SK-N-SH (cell line): ENCODE measurements at regions of chr12 and their contacts with region 1.

Region 1: GRCh38 chr12:52879394-52880351 is 25.2 kb downstream of the KRT8 start:
- DNase-seq: peak; percentile 88
- H3K4me3 ChIP-seq: peak overlapping the region; percentile 10 to 51; a peak in 1 of 4 replicates
- H3K27ac ChIP-seq: no peak overlapping the region
- H3K4me1 ChIP-seq: peaks cover 0 to under 1% of the 10 kb centered on the region in 2 experiments; a peak in 1 of 4 replicates
- H3K27me3 ChIP-seq: no peaks in the 10 kb centered on the region
- CTCF ChIP-seq: peak; percentile 74
- EP300 ChIP-seq: no peak
- RAD21 ChIP-seq: peak; percentile 93

Region 2: DNA sequence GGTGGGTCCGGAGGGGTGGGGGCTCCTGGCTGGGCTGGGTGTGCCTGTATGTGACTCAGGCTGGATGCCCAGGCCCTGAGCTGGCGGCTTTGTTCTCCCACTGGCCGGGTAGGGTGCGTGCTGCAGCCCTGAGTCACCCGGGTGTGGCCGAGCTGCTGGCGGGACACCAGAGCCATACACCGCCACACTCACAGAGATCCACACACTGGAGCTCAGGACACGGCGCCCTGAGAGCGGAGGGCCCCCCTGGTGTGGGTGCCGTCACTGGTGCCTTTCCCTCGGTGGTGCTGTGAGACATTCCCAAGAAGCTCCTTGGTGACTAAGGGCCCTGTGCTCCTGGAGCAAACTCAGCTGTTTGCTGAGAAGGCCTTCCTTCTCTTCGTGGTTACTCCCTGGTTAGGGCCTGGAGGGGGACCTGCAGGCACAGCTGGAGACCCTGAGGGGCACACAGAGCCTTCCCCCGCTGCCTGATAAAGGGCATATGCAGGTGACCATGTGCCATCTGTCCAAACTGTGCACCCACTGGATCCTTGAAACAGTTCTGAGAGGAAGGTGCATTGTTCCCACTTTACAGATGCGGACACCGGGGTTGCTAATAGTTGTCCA is 732.2 kb before region 1 on chr12:
- CTCF ChIA-PET with region 1: interaction called, 20 read pairs
- POLR2A ChIA-PET with region 1: no interaction called
- DNase-seq: peak; percentile 58
- H3K4me3 ChIP-seq: no peak overlapping the region
- H3K27ac ChIP-seq: peak overlapping the region in 1 of 2 experiments; percentile 91; a peak in 3 of 4 replicates
- H3K4me1 ChIP-seq: peaks cover 14 to 36% of the 10 kb centered on the region in 2 experiments; a peak in 3 of 4 replicates
- H3K27me3 ChIP-seq: no peaks in the 10 kb centered on the region
- CTCF ChIP-seq: no peak
- EP300 ChIP-seq: peak in 1 of 2 experiments; percentile 88; a peak in 1 of 4 replicates
- RAD21 ChIP-seq: no peak

Region 3: GRCh38 chr12:52372216-52373154 is 507.2 kb before region 1 on chr12:
- CTCF ChIA-PET with region 1: interaction called, 111 read pairs
- POLR2A ChIA-PET with region 1: no interaction called
- DNase-seq: peak; percentile 87
- H3K4me3 ChIP-seq: peak overlapping the region in 1 of 2 experiments; percentile 43; a peak in 1 of 4 replicates
- H3K27ac ChIP-seq: no peak overlapping the region
- H3K4me1 ChIP-seq: no peaks in the 10 kb centered on the region
- H3K27me3 ChIP-seq: peaks cover 48% of the 10 kb centered on the region
- CTCF ChIP-seq: peak; percentile 81
- EP300 ChIP-seq: no peak
- RAD21 ChIP-seq: peak; percentile 94

Region 4: DNA sequence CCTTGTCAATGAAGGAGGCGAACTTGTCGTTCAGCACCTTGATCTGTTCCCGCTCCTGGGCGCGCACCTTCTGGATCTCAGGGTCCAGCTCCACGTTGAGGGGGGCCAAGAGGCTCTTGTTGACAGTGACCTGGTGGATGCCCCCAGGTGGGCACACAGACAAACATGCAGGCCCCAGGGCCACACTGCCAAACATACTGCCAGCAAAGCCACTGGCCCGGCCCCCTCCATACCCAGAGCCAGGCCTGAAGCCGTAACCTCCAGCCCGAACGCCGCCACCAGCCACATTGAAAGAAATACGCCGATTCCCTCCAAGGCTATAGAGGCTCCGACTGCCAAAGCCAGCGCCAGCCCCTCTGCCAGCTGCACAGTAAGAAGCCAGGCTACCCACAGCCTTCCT is 306.4 kb before region 1 on chr12:
- CTCF ChIA-PET with region 1: interaction called, 76 read pairs
- POLR2A ChIA-PET with region 1: no interaction called
- DNase-seq: no peak
- H3K4me3 ChIP-seq: no peak overlapping the region
- H3K27ac ChIP-seq: no peak overlapping the region
- H3K4me1 ChIP-seq: no peaks in the 10 kb centered on the region
- H3K27me3 ChIP-seq: peaks cover 77% of the 10 kb centered on the region; the same call in 1 of the 2 replicates
- CTCF ChIP-seq: no peak
- EP300 ChIP-seq: no peak
- RAD21 ChIP-seq: no peak

Region 5: GRCh38 chr12:52865090-52865944 is 14.4 kb before region 1 on chr12:
- CTCF ChIA-PET with region 1: interaction called, 30 read pairs
- POLR2A ChIA-PET with region 1: no interaction called
- DNase-seq: peak; percentile 87
- H3K4me3 ChIP-seq: peak overlapping the region in 1 of 2 experiments; percentile 17; a peak in 1 of 4 replicates
- H3K27ac ChIP-seq: no peak overlapping the region
- H3K4me1 ChIP-seq: no peaks in the 10 kb centered on the region; a peak in 1 of 4 replicates
- H3K27me3 ChIP-seq: peaks cover 12% of the 10 kb centered on the region; the same call in 1 of the 2 replicates
- CTCF ChIP-seq: peak; percentile 78
- EP300 ChIP-seq: no peak
- RAD21 ChIP-seq: peak; percentile 69

Region 6: DNA sequence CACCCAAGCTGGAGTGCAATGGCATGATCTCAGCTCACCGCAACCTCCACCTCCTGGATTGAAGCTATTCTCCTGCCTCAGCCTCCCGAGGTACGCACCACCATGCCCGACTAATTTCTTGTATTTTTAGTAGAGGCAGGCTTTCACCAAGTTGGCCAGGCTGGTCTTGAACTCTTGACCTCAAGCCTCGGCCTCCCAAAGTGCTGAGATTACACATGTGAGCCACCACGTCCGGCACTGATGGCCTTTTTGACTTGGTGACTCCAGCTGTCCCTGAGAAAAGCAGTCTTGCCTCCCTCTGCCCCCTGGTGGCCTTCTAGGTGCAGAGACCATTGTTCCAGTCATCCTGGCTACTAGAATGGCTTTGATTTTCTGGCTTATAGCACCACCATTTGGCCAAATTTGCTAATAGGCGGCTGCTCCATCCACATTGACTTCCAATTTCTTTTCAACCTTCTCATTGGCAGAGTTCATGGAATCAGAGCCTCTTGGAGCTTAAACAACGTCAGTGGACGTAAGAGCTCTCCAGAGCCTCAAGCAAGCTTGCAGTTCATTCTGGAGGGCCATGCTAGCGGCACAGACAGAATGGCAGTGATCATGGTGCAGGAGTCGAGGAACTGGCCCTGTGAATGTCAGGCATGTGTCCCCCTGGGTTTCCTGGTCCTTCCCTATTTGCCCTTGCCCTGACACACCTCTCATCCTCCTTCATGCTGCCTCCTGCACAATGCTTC is 101.2 kb after region 1 on chr12:
- CTCF ChIA-PET with region 1: interaction called, 485 read pairs
- POLR2A ChIA-PET with region 1: interaction called, 3 read pairs
- DNase-seq: peak; percentile 83
- H3K4me3 ChIP-seq: peak overlapping the region in 1 of 2 experiments; percentile 6; a peak in 1 of 4 replicates
- H3K27ac ChIP-seq: no peak overlapping the region
- H3K4me1 ChIP-seq: peaks cover 0 to 12% of the 10 kb centered on the region in 2 experiments; a peak in 2 of 4 replicates
- H3K27me3 ChIP-seq: no peaks in the 10 kb centered on the region
- CTCF ChIP-seq: peak; percentile 100
- EP300 ChIP-seq: no peak
- RAD21 ChIP-seq: peak; percentile 99

Region 7: DNA sequence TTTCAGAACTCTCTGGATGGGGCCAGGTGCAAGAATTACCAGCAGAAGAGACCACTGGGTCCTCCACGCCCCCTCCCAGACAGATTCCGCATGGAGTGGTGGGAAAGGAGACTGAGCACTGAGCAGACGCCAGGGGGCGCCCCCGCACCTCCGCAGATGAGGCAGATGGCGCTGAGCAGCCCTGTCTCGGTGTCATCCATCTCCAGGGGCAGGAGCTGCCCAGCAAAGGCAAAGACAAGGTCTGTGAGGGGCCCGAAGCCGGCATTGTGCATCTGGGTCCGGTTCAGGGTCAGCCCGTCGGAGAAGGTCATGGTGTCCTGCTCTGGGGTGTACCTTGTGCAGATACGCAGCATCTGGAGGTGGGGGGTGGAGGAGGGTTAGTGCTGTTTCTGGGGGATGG is 333.7 kb after region 1 on chr12:
- CTCF ChIA-PET with region 1: no interaction called
- POLR2A ChIA-PET with region 1: no interaction called
- DNase-seq: peak; percentile 93
- H3K4me3 ChIP-seq: no peak overlapping the region
- H3K27ac ChIP-seq: no peak overlapping the region; a peak in 1 of 4 replicates
- H3K4me1 ChIP-seq: peaks cover 6 to 19% of the 10 kb centered on the region in 2 experiments; a peak in 3 of 4 replicates
- H3K27me3 ChIP-seq: no peaks in the 10 kb centered on the region
- CTCF ChIP-seq: peak; percentile 93
- EP300 ChIP-seq: no peak
- RAD21 ChIP-seq: peak; percentile 96

Region 8: DNA sequence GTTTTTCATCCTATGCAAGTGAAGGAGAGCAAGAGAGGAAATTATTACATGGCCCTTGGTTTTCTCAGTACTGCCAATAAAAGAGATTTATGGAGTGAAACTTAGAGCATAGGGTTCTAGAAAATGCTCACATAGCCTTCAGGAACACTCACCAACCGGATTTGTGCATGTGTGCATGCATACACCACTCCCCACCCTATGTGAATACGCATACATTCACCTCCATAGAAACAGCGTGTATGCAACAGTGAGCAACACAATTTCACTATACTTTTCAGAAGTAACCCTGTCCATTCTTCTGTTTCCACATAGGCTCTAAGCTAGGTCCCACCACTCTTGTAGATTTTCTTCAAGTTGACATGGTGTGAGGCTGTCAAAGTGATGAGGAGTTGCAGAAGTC is 1027.4 kb after region 1 on chr12:
- CTCF ChIA-PET with region 1: no interaction called
- POLR2A ChIA-PET with region 1: no interaction called
- DNase-seq: no peak
- H3K4me3 ChIP-seq: no peak overlapping the region
- H3K27ac ChIP-seq: no peak overlapping the region
- H3K4me1 ChIP-seq: no peaks in the 10 kb centered on the region
- H3K27me3 ChIP-seq: peaks cover 18% of the 10 kb centered on the region
- CTCF ChIP-seq: no peak
- EP300 ChIP-seq: no peak
- RAD21 ChIP-seq: no peak